Mammary epithelial cell (primary cell): ENCODE measurements at regions of chr2 and their contacts with region 1.

Region 1: DNA sequence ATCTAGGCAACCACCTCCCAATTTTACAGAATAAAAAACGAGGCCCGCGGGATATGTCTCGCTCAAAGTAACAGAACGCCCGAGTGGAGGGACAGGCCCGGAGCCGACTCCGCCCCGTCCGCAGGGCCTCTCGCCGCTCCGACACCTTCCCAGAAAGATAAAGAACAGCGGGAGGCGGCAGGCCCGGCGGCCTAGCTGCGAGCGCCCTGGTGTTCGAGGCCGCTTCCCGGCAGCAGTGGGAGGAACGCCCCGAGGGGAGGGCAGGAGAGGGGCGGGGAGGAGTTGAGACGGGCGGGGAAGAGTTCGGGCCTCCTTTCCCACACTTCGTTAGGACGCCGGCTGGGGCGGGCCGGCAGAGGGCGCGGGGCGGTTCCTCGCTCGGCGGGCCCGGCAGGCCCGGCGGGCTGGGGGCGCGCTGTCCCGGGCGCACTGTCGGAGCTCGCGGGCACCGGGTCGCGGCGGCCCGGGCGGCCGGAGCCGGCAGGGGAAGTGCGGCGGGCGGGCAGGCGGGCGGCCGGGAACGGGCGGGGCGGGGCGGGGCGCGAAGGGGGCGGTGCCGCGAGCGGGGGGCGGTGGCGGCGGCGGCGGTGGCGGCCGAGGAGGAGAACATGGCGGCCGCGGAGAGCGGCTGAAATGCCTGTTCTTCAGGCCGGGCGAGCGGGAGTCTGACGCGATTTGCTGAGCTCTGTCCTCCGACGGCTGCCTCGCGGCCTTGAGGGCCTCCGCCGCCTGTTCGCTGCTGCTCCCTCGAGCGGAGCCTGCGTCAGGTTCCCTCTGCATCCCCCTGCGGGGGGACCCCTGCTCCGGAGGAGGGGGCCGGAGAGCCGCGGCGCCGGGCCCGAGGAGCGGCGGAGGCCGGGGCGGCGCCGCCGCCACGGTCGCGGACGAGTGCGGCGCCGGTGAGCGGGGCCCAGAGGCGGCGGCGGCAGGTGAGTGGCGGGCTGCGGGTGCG is at the start of gene NCOA1:
- DNase-seq: peak; percentile 77
- H3K4me3 ChIP-seq: peak within 1 kb of the TSS; percentile 82 to 94 (median 88)
- H3K27ac ChIP-seq: peak within 1 kb of the TSS; percentile 12
- H3K4me1 ChIP-seq: peaks cover 17% of the 10 kb centered on the region
- H3K27me3 ChIP-seq: no peaks in the 10 kb centered on the region
- CTCF ChIP-seq: no peak
- total RNA-seq, gene NCOA1: 10.9 to 13.2 TPM

Region 2: DNA sequence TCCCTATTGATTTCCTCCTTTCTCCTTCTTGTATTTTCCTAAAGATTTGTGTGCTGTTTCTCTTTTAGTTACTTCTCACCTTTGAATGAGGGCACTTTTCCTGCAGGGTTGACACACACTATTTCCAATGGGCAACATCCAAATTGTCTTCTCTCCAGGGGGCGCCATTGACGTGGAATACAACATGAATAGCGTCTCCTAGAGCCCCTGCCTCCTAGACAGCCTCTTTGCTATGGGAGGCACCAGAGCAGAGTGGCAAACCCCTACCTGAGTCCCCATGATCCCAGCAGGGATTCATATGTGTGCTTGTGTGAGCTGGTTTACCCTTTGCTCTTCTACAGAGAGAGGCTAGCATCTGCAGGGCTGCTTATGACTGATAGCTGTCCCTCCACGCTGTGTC is 69.3 kb before region 1 on chr2:
- CTCF ChIA-PET with region 1: no interaction called
- dilution Hi-C with region 1: loop called (anchors 5 kb)
- in situ Hi-C with region 1: no loop called
- intact Hi-C with region 1: loop called (anchors 5 kb)
- DNase-seq: peak; percentile 33
- H3K4me3 ChIP-seq: no peak overlapping the region
- H3K27ac ChIP-seq: no peak overlapping the region
- H3K4me1 ChIP-seq: no peaks in the 10 kb centered on the region
- H3K27me3 ChIP-seq: peaks cover 2% of the 10 kb centered on the region
- CTCF ChIP-seq: peak; percentile 35 to 69

Region 3: GRCh38 chr2:24429197-24430074 is 61.5 kb before region 1 on chr2:
- CTCF ChIA-PET with region 1: no interaction called
- dilution Hi-C with region 1: loop called (anchors 5 kb)
- in situ Hi-C with region 1: no loop called
- intact Hi-C with region 1: loop called (anchors 5 kb)
- DNase-seq: peak; percentile 48
- H3K4me3 ChIP-seq: no peak overlapping the region
- H3K27ac ChIP-seq: no peak overlapping the region
- H3K4me1 ChIP-seq: no peaks in the 10 kb centered on the region
- H3K27me3 ChIP-seq: peaks cover 2% of the 10 kb centered on the region
- CTCF ChIP-seq: no peak

Region 4: DNA sequence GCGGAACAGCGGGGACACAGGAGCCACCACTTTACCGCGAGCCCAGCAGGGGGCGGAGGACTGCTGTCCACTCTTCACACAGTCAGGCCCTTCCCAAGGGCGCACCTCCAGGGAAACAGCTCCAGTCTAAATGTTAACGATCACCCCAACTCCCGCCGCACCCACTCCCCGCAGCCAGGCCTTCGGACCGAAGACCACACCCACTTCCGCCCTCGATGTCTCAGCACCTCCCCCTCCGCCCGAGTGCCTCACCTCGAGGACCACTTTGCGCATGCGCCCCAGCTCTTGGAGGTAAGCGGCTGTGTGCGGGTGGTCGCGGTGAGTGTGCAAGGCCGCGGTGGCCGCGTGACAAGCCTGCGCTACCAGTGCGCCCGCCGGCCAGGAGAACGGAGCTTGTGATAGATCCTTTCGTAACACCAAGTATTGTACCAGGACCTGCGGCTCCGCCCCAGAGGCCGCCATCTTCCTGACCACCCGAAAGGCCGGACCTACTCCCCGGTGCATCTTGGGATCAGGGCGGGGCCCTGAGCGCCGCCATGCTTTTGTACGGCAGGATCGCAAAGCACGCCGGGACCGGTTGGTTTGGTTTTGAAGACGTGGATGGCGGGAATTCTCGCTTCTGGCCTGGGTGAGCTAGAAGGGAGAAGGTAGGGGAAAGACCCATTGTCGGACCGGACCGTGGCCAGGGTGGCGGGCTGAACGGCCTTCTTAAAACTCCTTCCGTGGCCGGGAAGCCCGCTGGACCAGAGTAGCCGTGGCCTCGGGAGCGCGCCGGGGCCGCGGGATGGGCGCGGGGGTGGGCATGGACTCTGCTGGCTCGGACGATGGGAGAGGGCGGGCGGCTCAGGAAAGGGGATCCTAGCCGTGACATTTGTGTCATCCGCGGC is 302.2 kb after region 1 on chr2 and contains the starts of genes CENPO and PTRHD1:
- CTCF ChIA-PET with region 1: no interaction called
- dilution Hi-C with region 1: no loop called
- in situ Hi-C with region 1: no loop called
- intact Hi-C with region 1: loop called (anchors 5 kb)
- DNase-seq: peak; percentile 95
- H3K4me3 ChIP-seq: peak within 1 kb of the TSS; percentile 64 to 78 (median 71)
- H3K27ac ChIP-seq: peak within 1 kb of the TSS; percentile 88
- H3K4me1 ChIP-seq: peaks cover 24% of the 10 kb centered on the region
- H3K27me3 ChIP-seq: no peaks in the 10 kb centered on the region
- CTCF ChIP-seq: peak; percentile 55 to 79
- total RNA-seq, gene CENPO: 7.2 to 27.7 TPM
- total RNA-seq, gene PTRHD1: 14.8 to 28.3 TPM